HepG2 (cell line): ENCODE measurements at regions of chr22 and their contacts with region 1.

Region 1: DNA sequence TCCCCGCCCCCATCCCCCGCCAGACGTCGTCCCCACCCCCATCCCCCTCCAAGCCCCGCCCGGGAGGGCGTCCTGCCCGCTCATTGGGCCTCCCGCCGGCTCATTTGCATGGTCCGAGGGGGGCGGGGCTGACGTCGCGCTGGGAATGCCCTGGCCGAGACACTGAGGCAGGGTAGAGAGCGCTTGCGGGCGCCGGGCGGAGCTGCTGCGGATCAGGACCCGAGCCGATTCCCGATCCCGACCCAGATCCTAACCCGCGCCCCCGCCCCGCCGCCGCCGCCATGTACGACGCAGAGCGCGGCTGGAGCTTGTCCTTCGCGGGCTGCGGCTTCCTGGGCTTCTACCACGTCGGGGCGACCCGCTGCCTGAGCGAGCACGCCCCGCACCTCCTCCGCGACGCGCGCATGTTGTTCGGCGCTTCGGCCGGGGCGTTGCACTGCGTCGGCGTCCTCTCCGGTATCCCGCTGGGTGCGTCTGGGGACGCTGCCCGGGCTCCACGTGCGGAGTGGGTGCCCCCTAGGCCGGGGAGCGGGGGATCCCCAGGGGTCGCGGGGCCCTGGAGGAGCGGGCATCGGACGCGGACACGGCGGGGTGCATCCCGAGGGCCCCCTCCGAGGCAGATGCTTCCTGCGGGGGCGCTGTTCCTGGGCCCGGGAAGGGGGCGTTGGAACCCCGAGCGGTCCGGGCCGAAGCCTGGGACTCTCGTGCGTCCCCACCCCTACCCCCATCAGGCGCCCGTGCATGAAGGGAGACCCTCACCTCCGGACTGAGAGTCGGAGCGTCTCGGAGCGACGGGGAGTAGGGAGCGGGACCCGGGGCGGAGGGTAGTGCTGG is at the start of gene PNPLA3:
- DNase-seq: peak; percentile 77
- ATAC-seq: peak; percentile 67
- H3K4me3 ChIP-seq: peak within 1 kb of the TSS; percentile 85 to 88 (median 87)
- H3K27ac ChIP-seq: peak within 1 kb of the TSS; percentile 97
- H3K4me1 ChIP-seq: peaks cover 66% of the 10 kb centered on the region
- H3K27me3 ChIP-seq: no peaks in the 10 kb centered on the region; a peak in 2 of 5 replicates
- CTCF ChIP-seq: peak; percentile 58
- EP300 ChIP-seq: no peak
- POLR2A ChIP-seq: peak; percentile 88 to 99
- RAD21 ChIP-seq: no peak
- total RNA-seq, gene PNPLA3: 13.7 and 16.9 TPM in 2 replicates

Region 2: DNA sequence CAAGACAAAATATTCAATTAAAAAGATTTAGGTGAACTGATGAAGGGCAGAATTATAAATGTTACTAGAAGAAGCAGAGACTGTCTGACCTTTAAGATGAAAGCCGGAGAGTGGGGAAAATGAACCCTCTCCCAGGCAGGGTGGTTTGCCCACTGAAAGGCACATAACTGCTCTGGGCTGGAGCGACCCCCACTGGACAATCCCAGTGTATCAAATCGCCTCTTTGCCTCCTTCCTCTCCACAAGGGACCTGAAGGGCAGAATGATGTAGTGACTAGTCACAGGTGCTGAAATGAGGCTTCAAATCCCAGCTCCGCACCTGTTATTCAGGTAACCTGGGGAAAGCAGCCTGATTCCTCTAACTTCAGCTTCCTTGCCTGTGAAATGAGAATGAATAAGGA is 180.7 kb before region 1 on chr22:
- CTCF ChIA-PET with region 1: no interaction called
- POLR2A ChIA-PET with region 1: no interaction called
- in situ Hi-C with region 1: no loop called
- intact Hi-C with region 1: no loop called
- DNase-seq: no peak
- ATAC-seq: no peak
- H3K4me3 ChIP-seq: no peak overlapping the region
- H3K27ac ChIP-seq: no peak overlapping the region
- H3K4me1 ChIP-seq: no peaks in the 10 kb centered on the region
- H3K27me3 ChIP-seq: peaks cover 3 to 68% of the 10 kb centered on the region in 2 experiments; a peak in 3 of 5 replicates
- CTCF ChIP-seq: 0 out of 2 replicates have a peak, but pooled peaks have one; percentile 24
- EP300 ChIP-seq: no peak
- POLR2A ChIP-seq: no peak
- RAD21 ChIP-seq: no peak

Region 3: DNA sequence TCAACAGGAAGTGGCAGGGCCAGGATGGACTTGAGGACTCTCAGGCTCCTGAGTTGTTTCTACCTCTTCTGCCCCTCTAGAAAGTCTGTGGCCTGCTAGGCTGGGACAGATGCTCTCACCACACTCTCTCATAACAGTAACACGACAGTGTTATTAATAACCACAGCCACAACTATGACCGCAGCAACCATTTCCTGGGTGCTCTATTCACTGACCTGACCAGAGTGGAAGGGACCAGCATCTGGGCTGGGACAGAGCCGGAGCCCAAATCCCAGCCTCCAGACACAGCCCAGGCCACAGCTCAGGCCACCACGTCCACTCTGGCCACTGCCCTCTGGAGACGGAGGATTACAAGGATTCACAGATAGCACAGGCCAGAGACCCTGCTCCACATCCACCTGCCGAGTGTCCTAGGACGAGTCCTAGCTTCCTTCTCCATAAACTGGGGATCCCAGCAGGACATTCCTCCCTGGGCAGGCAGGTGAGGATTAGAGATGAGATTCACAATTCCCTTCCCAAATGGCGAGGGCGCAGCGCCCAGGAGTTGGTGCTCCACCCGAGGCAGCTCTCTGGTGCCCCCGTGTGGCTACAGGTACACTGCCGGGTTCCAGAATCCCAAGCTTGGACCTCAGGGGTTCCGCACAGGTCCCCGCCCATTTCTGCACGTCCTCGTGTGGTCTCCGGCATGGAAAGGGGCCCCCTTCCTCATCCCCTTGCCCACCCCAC is 39.1 kb before region 1 on chr22:
- CTCF ChIA-PET with region 1: no interaction called
- POLR2A ChIA-PET with region 1: no interaction called
- in situ Hi-C with region 1: no loop called
- intact Hi-C with region 1: loop called (anchors 1 kb)
- DNase-seq: no peak
- ATAC-seq: peak; percentile 54
- H3K4me3 ChIP-seq: no peak overlapping the region
- H3K27ac ChIP-seq: no peak overlapping the region
- H3K4me1 ChIP-seq: no peaks in the 10 kb centered on the region
- H3K27me3 ChIP-seq: no peaks in the 10 kb centered on the region; a peak in 2 of 5 replicates
- CTCF ChIP-seq: peak; percentile 74
- EP300 ChIP-seq: no peak
- POLR2A ChIP-seq: no peak
- RAD21 ChIP-seq: no peak

Region 4: GRCh38 chr22:43945632-43946383 is 22.0 kb after region 1 on chr22:
- CTCF ChIA-PET with region 1: no interaction called
- POLR2A ChIA-PET with region 1: interaction called, 10 read pairs
- in situ Hi-C with region 1: no loop called
- intact Hi-C with region 1: loop called (anchors 1 kb)
- DNase-seq: peak; percentile 60
- ATAC-seq: peak; percentile 97
- H3K4me3 ChIP-seq: no peak overlapping the region
- H3K27ac ChIP-seq: no peak overlapping the region
- H3K4me1 ChIP-seq: no peaks in the 10 kb centered on the region
- H3K27me3 ChIP-seq: no peaks in the 10 kb centered on the region
- CTCF ChIP-seq: peak; percentile 89
- EP300 ChIP-seq: no peak
- POLR2A ChIP-seq: peak in 1 of 2 experiments; percentile 12; a peak in 1 of 4 replicates
- RAD21 ChIP-seq: peak; percentile 73

Region 5: DNA sequence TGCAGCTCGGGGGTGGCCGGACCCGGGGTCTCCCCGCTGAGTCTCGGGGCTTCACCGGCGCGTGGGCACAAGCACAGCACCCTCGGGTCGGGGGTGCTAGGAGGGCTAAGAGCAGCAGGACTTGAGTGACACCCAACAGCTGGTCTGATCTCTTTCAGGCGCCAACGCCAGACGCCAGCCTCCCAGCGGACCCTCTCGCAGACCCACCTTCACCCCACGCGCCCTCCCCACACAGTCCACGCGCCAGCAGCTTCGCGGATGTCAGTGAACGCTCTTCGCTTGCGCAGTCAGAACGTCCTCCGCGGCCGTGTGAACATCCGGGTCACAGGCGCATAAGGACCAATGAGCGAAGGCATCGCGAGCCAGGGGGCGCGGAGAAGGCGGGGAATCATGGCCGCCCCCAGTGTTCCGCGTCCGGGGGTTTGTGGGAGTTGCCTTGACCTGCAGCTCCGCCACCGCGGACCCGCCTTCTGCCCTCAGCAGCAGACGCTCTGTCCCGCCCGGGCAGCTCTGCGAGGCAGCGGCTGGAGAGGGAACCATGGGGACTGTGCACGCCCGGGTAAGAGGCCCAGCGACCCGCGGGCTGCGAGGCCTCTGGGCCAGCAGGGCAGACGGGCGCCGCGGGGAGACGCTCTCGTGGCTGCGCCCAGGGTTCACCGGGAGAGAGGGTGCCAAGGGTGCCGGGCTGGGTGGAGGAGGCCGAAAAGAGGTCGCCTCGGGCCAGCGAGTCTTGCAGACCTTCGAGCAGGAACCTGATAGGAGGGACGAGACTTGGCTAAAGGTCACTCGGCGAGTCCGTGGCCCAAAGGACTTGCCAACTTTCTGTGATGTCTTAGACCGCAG is 31.4 kb after region 1 on chr22 and contains the start of gene SAMM50:
- CTCF ChIA-PET with region 1: no interaction called
- POLR2A ChIA-PET with region 1: interaction called, 21 read pairs
- in situ Hi-C with region 1: no loop called
- intact Hi-C with region 1: no loop called
- DNase-seq: peak; percentile 87
- ATAC-seq: peak; percentile 93
- H3K4me3 ChIP-seq: peak within 1 kb of the TSS; percentile 77 to 99 (median 96)
- H3K27ac ChIP-seq: peak within 1 kb of the TSS; percentile 89
- H3K4me1 ChIP-seq: peaks cover 31% of the 10 kb centered on the region
- H3K27me3 ChIP-seq: no peaks in the 10 kb centered on the region; a peak in 1 of 5 replicates
- CTCF ChIP-seq: no peak
- EP300 ChIP-seq: no peak
- POLR2A ChIP-seq: peak; percentile 60 to 95; a peak in 2 of 4 replicates
- RAD21 ChIP-seq: no peak
- total RNA-seq, gene SAMM50: 63.4 and 95.8 TPM in 2 replicates